HepG2 (cell line): ENCODE measurements at regions of chr6 and their contacts with region 1.

Region 1: DNA sequence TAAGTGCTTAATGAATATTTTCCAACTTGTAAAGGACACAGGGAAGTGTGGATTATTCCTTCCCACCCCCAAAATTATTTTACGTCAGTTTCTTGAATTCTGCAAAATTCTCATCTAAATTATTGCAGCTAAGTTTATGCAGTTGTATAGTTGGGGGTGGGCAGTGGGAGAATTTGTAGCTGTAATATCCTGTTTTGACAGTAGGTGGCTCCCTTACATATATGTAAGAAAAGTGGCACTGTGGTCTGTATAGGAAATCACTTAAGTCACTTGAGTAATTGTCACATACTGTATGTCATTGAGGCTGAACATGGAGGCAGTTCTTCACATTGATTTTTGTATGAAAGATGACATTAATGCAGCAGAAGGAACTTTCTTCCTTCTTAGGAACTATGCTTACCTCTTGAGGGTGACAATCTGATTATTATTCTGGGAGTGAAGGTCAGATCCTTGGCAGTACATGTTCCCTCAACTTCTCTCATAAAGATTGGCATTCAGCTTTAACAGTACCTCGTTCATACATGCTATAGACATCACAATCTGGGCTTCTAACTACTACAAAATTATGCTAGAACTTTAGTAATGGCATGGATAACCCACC is 14.7 kb upstream of the CFAP206 start:
- DNase-seq: peak; percentile 59
- ATAC-seq: peak; percentile 83
- H3K4me3 ChIP-seq: no peak overlapping the region
- H3K27ac ChIP-seq: no peak overlapping the region
- H3K4me1 ChIP-seq: no peaks in the 10 kb centered on the region
- H3K27me3 ChIP-seq: no peaks in the 10 kb centered on the region
- CTCF ChIP-seq: peak; percentile 73
- EP300 ChIP-seq: no peak
- POLR2A ChIP-seq: no peak
- RAD21 ChIP-seq: peak; percentile 55; the same call in 1 of the 2 replicates

Region 2: GRCh38 chr6:87066449-87067333 is 326.4 kb before region 1 on chr6:
- CTCF ChIA-PET with region 1: no interaction called
- POLR2A ChIA-PET with region 1: no interaction called
- in situ Hi-C with region 1: no loop called
- intact Hi-C with region 1: loop called (anchors 1 kb)
- DNase-seq: peak; percentile 51
- ATAC-seq: peak; percentile 87
- H3K4me3 ChIP-seq: peak overlapping the region; percentile 11 to 41 (median 41); a peak in 4 of 6 replicates
- H3K27ac ChIP-seq: no peak overlapping the region
- H3K4me1 ChIP-seq: peaks cover 17% of the 10 kb centered on the region
- H3K27me3 ChIP-seq: no peaks in the 10 kb centered on the region; a peak in 1 of 5 replicates
- CTCF ChIP-seq: peak; percentile 66
- EP300 ChIP-seq: peak in 1 of 2 experiments; percentile 29; a peak in 1 of 4 replicates
- POLR2A ChIP-seq: no peak
- RAD21 ChIP-seq: peak; percentile 30; the same call in 1 of the 2 replicates

Region 3: DNA sequence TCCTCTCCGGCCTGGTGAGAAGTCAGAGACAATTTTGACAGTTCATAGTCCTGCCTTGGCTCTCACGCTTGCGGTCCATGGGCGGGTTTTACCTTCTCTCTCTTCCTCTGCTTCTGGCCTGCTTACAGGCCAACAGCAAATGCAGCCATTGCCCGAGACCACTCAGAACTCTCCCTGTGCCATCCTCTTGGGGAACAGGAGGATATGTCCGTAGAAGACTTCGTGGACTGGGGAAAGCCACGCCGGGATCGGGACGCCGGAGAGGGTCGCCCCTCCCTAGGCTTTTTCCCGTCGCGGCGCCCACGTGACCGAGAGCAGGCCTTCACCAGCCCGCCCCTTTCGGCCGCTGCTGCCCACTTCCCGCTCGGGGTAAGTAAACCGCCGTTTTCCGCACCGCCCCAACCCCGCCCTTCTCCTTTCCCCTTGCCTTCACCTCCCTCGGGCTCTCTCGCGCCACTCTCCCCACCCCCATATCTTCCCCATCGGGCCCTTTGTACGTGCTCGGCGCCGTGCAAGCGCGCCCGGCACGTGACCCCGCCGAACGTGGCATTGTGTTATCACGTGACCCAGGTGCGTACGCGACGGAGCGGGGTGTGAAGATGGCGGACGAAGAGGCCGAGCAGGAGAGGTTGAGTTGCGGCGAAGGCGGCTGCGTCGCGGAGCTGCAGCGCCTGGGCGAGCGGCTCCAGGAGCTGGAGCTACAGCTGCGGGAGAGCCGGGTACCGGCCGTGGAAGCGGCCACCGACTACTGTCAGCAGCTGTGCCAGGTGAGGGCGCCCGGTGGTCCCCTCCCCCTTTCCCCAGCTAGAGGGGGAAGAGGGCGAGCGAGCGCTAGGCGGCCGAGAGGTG is 237.9 kb before region 1 on chr6 and contains the start of gene ZNF292:
- CTCF ChIA-PET with region 1: no interaction called
- POLR2A ChIA-PET with region 1: no interaction called
- in situ Hi-C with region 1: no loop called
- intact Hi-C with region 1: loop called (anchors 5 kb)
- DNase-seq: peak; percentile 93
- ATAC-seq: peak; percentile 88
- H3K4me3 ChIP-seq: peak within 1 kb of the TSS; percentile 86 to 96 (median 88)
- H3K27ac ChIP-seq: peak within 1 kb of the TSS; percentile 87
- H3K4me1 ChIP-seq: peaks cover 32% of the 10 kb centered on the region
- H3K27me3 ChIP-seq: peaks cover 0 to 3% of the 10 kb centered on the region in 2 experiments; a peak in 1 of 5 replicates
- CTCF ChIP-seq: no peak; the same call in 1 of the 2 replicates
- EP300 ChIP-seq: peak in 1 of 2 experiments; percentile 21; a peak in 1 of 4 replicates
- POLR2A ChIP-seq: peak in 1 of 2 experiments; percentile 78; a peak in 2 of 4 replicates
- RAD21 ChIP-seq: peak; percentile 25; the same call in 1 of the 2 replicates
- total RNA-seq, gene ZNF292: 12.8 and 15.4 TPM in 2 replicates

Region 4: DNA sequence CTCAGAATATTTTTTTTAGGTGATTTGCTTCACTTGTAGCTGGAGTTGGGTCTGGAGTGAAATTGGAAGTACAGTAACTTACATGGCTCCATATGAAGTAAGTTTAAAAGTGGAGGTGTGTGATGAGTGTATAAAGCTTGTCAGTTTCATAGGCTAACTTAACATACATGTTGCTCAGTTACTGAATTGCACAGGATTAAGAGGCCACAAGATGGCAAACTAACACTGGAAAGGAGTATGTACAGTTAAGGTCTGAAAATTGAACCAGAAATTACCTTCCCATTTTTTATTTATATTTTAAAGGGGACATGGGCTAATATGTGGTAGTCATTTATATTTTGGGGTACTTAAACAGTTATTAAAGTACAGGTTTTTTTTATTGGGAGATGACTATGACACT is 116.0 kb before region 1 on chr6:
- CTCF ChIA-PET with region 1: no interaction called
- POLR2A ChIA-PET with region 1: no interaction called
- in situ Hi-C with region 1: no loop called
- intact Hi-C with region 1: loop called (anchors 2 kb)
- DNase-seq: peak; percentile 22
- ATAC-seq: peak; percentile 56
- H3K4me3 ChIP-seq: no peak overlapping the region
- H3K27ac ChIP-seq: no peak overlapping the region
- H3K4me1 ChIP-seq: no peaks in the 10 kb centered on the region
- H3K27me3 ChIP-seq: no peaks in the 10 kb centered on the region
- CTCF ChIP-seq: peak; percentile 37
- EP300 ChIP-seq: no peak
- POLR2A ChIP-seq: no peak
- RAD21 ChIP-seq: no peak

Region 5: DNA sequence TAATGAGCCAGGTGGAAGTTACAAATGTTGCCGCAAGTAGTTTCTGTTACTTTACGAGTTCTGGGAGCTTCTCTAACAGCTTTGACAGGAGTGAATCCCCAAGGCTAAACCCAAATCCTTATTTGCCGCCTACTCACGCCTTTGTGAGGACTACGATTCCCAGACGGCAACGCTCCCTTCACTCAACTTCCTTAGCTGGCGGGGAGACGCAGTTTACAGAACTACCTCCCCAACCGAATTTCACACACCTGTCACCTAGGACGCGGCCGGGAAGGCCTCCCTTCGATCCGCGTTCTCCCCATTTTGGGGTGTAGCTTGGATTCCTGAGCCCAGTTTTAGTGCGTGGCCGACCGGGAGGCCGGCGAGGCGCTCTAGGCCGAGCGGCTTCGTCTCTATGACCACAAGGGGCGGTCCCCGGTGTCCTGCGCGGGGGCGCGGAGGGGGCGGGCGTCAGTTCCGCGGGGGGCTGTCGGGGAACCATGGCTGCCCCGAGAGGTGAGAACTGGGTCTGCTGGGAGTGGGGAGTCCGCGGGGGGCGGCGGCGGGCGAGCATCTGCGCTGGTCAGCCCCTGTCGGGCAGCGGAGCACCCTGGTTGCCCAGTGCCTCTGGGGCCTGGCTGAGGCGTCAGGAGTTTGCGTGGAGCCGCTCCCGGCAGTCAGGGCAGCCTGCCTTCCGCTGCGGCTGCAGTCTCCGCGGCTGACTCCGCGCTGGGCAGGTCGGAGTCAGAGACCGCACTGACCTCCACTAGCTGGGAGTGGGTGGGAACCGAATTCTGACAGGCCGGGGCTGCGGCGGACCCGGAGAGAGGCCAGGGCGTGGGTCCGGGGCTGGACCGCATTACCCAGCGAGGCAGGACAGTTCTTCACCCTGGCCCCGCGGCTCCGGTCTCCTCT is 79.7 kb after region 1 on chr6 and contains the start of gene SLC35A1:
- CTCF ChIA-PET with region 1: no interaction called
- POLR2A ChIA-PET with region 1: no interaction called
- in situ Hi-C with region 1: no loop called
- intact Hi-C with region 1: loop called (anchors 1 kb)
- DNase-seq: peak; percentile 60
- ATAC-seq: peak; percentile 98
- H3K4me3 ChIP-seq: peak within 1 kb of the TSS; percentile 91 to 100 (median 94)
- H3K27ac ChIP-seq: peak within 1 kb of the TSS; percentile 71
- H3K4me1 ChIP-seq: peaks cover 27% of the 10 kb centered on the region
- H3K27me3 ChIP-seq: no peaks in the 10 kb centered on the region; a peak in 1 of 5 replicates
- CTCF ChIP-seq: peak; percentile 38
- EP300 ChIP-seq: no peak
- POLR2A ChIP-seq: peak; percentile 63 to 89; a peak in 3 of 4 replicates
- RAD21 ChIP-seq: peak; percentile 7; the same call in 1 of the 2 replicates
- total RNA-seq, gene SLC35A1: 15.6 and 24.8 TPM in 2 replicates

Region 6: GRCh38 chr6:88870717-88871330 is 1477.7 kb after region 1 on chr6:
- CTCF ChIA-PET with region 1: no interaction called
- POLR2A ChIA-PET with region 1: no interaction called
- in situ Hi-C with region 1: no loop called
- intact Hi-C with region 1: loop called (anchors 5 kb)
- DNase-seq: peak; percentile 50
- ATAC-seq: no peak
- H3K4me3 ChIP-seq: no peak overlapping the region
- H3K27ac ChIP-seq: no peak overlapping the region
- H3K4me1 ChIP-seq: peaks cover 23% of the 10 kb centered on the region
- H3K27me3 ChIP-seq: no peaks in the 10 kb centered on the region
- CTCF ChIP-seq: peak; percentile 65
- EP300 ChIP-seq: no peak
- POLR2A ChIP-seq: no peak
- RAD21 ChIP-seq: peak; percentile 19; the same call in 1 of the 2 replicates